Activated CD4-positive, alpha-beta memory T cell treated with anti-CD3 and anti-CD28 coated beads, Interleukin-2, amount 10 ng/mL, durations not matched to agents 7 days and 5 days (primary cell): ENCODE measurements at regions of chr3 and their contacts with region 1.

Region 1: DNA sequence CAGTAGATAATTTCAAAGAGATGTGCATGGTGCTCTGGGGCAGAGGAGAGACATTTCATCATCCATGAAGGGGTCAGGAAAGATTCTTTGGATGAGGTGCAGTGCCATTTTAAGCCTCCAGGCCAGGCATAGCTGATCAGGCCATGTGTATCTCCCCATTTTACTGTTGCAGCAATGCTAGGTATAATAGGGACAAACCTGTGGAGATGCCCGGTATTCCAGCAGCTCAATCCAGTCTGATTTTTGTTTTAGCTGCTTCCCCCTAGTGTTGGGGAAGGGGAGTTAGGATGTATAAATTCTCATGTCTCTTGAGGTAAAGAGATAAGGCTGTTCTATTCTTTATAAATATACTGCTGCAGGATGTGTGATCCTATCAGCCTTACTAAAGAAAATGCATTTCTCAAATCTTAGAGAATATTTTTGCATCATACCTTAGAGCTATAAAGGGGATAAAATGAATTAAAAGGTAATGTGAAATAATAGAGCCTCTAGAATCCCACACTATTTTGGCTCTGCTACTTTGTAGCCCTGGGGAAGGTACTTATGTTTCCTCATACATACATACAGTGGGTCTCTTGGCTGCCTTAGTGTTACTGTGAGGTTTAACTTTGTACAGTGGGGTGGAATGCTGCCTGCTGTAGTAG is 5.2 kb downstream of the CDV3 start:
- DNase-seq: no peak
- H3K4me3 Mint-ChIP-seq: peak overlapping the region; percentile 20
- H3K27ac Mint-ChIP-seq: peak overlapping the region; percentile 27
- H3K4me1 Mint-ChIP-seq: peaks cover 57% of the 10 kb centered on the region
- H3K27me3 Mint-ChIP-seq: no peaks in the 10 kb centered on the region

Region 2: GRCh38 chr3:133384331-133385027 is 194.2 kb before region 1 on chr3:
- CTCF ChIA-PET with region 1: no interaction called
- POLR2A ChIA-PET with region 1: no interaction called
- DNase-seq: peak; percentile 31
- H3K4me3 Mint-ChIP-seq: no peak overlapping the region
- H3K27ac Mint-ChIP-seq: no peak overlapping the region
- H3K4me1 Mint-ChIP-seq: no peaks in the 10 kb centered on the region
- H3K27me3 Mint-ChIP-seq: no peaks in the 10 kb centered on the region

Region 3: GRCh38 chr3:133487920-133488540 is 90.6 kb before region 1 on chr3:
- CTCF ChIA-PET with region 1: interaction called, 23 read pairs
- POLR2A ChIA-PET with region 1: interaction called, 110 read pairs
- DNase-seq: peak; percentile 45
- H3K4me3 Mint-ChIP-seq: no peak overlapping the region
- H3K27ac Mint-ChIP-seq: no peak overlapping the region
- H3K4me1 Mint-ChIP-seq: peaks cover 42% of the 10 kb centered on the region
- H3K27me3 Mint-ChIP-seq: no peaks in the 10 kb centered on the region

Region 4: GRCh38 chr3:133649486-133650068 is 70.9 kb after region 1 on chr3:
- CTCF ChIA-PET with region 1: interaction called, 10 read pairs
- POLR2A ChIA-PET with region 1: interaction called, 6 read pairs
- DNase-seq: no peak
- H3K4me3 Mint-ChIP-seq: no peak overlapping the region
- H3K27ac Mint-ChIP-seq: no peak overlapping the region
- H3K4me1 Mint-ChIP-seq: peaks cover 16% of the 10 kb centered on the region
- H3K27me3 Mint-ChIP-seq: no peaks in the 10 kb centered on the region